Calu3 (cell line): ENCODE measurements at regions of chr1 and their contacts with region 1.

Region 1: DNA sequence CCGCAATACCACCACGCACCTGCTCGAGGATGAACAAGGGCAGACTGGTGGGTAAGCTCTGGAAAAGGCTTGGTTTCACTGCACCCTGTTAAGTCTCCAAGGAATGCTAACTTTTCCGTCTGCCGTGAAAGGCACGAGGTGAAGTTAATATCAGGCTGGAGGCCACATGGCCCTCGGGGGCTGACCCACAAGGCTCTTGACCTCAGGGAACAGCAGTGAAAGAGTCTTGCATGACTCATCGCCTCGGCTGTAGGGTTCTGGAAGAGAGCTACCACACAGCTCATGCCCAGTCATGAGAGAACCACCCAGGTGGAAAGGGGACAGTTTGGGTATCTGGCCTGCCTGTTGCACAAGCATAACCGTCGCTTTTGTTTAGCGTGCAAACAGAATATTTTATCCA is 24.7 kb downstream of the SCCPDH start:
- DNase-seq: no peak
- H3K4me3 Mint-ChIP-seq: no peak overlapping the region
- H3K27ac Mint-ChIP-seq: no peak overlapping the region
- H3K4me1 Mint-ChIP-seq: no peaks in the 10 kb centered on the region
- H3K27me3 Mint-ChIP-seq: no peaks in the 10 kb centered on the region
- CTCF ChIP-seq: no peak

Region 2: DNA sequence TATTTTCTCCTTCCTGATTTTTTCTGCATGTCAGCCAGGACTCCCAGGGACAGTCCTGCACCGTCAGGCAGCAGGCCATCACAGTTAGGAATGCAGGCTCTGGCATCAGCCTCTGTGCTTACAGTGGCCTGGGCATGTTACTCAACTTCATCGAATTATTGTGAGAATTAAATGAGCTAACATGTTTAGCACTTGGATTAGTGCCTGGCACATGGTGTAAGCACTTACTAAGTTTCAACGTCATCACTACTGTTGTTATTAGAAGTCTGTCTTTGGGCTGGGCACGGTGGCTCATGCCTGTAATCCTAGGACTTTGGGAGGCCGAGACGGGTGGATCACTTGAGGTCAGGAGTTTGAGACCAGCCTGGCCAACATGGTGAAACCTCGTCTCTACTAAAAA is 20.4 kb after region 1 on chr1:
- CTCF ChIA-PET with region 1: no interaction called
- intact Hi-C with region 1: no loop called
- DNase-seq: no peak
- H3K4me3 Mint-ChIP-seq: no peak overlapping the region
- H3K27ac Mint-ChIP-seq: no peak overlapping the region
- H3K4me1 Mint-ChIP-seq: no peaks in the 10 kb centered on the region
- H3K27me3 Mint-ChIP-seq: no peaks in the 10 kb centered on the region
- CTCF ChIP-seq: no peak

Region 3: DNA sequence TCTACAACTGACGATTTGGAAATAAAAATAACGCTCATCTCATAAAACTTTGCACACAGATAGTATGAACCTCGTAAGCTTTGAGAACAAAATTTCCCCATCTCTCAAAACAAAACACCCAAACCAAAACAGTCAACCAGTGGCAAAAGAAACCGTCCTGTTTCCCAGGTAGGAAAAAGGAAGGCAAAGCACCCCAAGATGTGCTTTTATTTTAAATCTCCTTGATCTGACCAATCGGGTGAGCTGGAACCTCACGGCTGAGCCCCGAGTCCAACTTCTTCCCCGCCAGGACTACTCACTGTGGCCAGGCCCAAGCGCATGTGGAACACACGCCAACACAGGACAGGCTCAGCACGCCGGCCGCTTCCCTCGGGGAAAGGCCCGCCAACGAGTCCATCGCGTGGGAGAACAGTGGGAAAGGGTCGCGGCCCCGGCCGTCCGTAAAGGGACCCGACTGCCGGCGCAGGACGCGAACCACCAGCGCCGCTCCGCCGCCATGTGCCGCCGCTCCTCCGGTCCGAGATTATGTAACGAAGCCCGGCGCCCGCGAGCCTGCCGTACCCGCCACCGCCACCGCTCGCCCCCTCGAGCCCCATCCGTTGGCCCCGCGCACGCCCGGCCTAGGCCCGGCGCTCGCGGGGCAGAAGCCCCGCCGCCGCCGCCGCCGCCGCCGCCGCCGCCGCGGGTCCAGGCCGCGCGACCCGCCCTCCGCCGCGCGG is 182.1 kb after region 1 on chr1:
- CTCF ChIA-PET with region 1: no interaction called
- intact Hi-C with region 1: no loop called
- DNase-seq: peak; percentile 48
- H3K4me3 Mint-ChIP-seq: peak overlapping the region; percentile 97
- H3K27ac Mint-ChIP-seq: peak overlapping the region; percentile 97
- H3K4me1 Mint-ChIP-seq: peaks cover 21% of the 10 kb centered on the region
- H3K27me3 Mint-ChIP-seq: no peaks in the 10 kb centered on the region
- CTCF ChIP-seq: no peak

Region 4: GRCh38 chr1:247738800-247739199 is 989.9 kb after region 1 on chr1:
- CTCF ChIA-PET with region 1: no interaction called
- intact Hi-C with region 1: loop called (anchors 10 kb)
- DNase-seq: no peak
- H3K4me3 Mint-ChIP-seq: no peak overlapping the region
- H3K27ac Mint-ChIP-seq: no peak overlapping the region
- H3K4me1 Mint-ChIP-seq: no peaks in the 10 kb centered on the region
- H3K27me3 Mint-ChIP-seq: no peaks in the 10 kb centered on the region
- CTCF ChIP-seq: no peak